ENCODE measurements at regions of chr1 and their contacts with region 1.

Region 1: GRCh38 chr1:30732277-30732996 is 9.1 kb upstream of the MATN1 start:
- DNase-seq: no peak
- ATAC-seq: peak; percentile 57
- H3K4me3 Mint-ChIP-seq: no peak overlapping the region
- H3K27ac Mint-ChIP-seq: peak overlapping the region; percentile 70
- H3K4me1 Mint-ChIP-seq: peaks cover 72% of the 10 kb centered on the region
- H3K27me3 Mint-ChIP-seq: no peaks in the 10 kb centered on the region
- CTCF ChIP-seq: no peak

Region 2: GRCh38 chr1:30743584-30744059 is 11.2 kb after region 1 on chr1:
- CTCF ChIA-PET with region 1: interaction called, 10 read pairs
- POLR2A ChIA-PET with region 1: interaction called, 662 read pairs
- intact Hi-C with region 1: loop called (anchors 1 kb)
- DNase-seq: no peak
- ATAC-seq: peak; percentile 72
- H3K4me3 Mint-ChIP-seq: peak overlapping the region; percentile 72
- H3K27ac Mint-ChIP-seq: peak overlapping the region; percentile 96
- H3K4me1 Mint-ChIP-seq: peaks cover 99% of the 10 kb centered on the region
- H3K27me3 Mint-ChIP-seq: no peaks in the 10 kb centered on the region
- CTCF ChIP-seq: no peak

Region 3: DNA sequence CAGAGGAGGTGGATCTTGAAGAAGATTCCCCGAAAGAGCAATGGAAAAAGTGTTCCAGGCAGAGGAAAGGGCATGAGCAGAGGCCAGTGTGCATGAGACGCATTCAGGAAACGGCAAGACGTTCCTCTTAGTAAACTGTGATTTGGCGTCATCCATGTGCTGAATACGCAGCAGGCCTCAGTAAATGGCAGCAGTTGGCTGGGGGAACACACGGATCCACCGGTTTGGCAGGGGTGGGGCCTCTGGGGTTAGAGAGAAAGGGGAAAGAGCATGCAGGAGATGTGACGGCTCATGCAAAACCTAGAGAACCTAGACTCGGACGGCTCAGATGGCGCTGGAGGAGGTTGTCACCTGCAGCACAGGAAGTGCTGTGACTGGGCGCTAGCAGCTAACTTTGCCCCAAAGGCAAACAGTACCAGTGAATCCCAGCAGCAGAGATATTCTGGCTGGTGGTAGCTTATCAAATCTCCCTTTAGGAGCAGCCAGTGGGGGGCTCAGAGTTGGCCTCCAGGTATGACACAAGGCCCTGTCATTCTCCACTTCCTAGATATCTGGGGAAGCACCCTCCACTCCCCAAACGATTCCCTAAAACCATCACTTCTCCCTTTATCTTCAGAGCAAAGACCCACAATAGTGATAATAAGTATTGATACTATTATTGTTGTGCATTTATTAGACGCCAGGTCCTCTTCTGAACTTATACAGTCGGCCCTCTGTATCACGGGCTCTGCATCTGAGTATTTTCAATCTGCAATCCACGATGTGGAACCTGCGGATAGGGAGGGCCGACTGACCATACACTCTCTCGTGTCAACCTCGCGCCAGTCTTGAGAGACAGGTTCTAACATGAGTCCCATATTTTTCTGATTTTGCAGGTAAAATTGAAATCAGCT is 17.5 kb after region 1 on chr1:
- CTCF ChIA-PET with region 1: interaction called, 10 read pairs
- POLR2A ChIA-PET with region 1: interaction called, 662 read pairs
- intact Hi-C with region 1: loop called (anchors 1 kb)
- DNase-seq: peak; percentile 59
- ATAC-seq: peak; percentile 33
- H3K4me3 Mint-ChIP-seq: peak overlapping the region; percentile 79
- H3K27ac Mint-ChIP-seq: peak overlapping the region; percentile 96
- H3K4me1 Mint-ChIP-seq: peaks cover 95% of the 10 kb centered on the region
- H3K27me3 Mint-ChIP-seq: no peaks in the 10 kb centered on the region
- CTCF ChIP-seq: no peak

Region 4: DNA sequence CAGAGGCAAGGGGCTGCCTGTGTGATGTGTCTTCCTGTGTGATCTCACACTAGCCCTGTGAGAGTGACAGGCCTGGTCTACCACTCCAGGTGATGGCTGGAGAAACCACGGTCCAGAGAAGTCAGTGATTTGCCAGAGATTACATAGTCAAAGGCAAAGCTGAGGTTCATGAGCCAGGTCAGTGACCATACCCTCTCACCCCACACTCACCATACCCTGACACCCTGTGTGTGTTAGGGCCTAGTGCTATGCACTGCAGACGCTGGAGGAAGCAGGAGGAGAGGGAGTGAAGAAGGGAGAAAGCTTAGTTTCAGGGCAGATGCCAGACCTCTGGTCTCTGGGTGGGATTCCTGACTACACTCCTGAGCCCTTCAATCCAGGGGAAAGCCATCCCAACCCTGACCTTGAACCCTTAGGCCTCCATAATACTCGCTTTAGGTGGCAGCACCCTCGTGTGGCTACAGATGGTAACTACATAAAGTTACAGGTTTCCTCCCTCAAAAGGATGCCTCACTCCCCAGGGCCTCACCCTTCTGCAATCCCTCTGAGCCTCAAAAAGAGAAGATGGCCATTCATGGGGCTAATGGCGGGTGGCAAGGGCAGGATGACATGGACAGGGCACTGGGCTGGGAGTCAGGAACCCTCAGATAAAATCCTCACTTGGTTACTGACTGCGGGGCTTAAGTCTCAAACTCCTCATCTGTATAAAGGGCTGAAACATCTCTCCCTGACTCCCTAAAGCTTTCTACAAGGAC is 196.9 kb after region 1 on chr1:
- CTCF ChIA-PET with region 1: interaction called, 3 read pairs
- POLR2A ChIA-PET with region 1: no interaction called
- intact Hi-C with region 1: loop called (anchors 5 kb)
- DNase-seq: no peak
- ATAC-seq: peak; percentile 56
- H3K4me3 Mint-ChIP-seq: no peak overlapping the region
- H3K27ac Mint-ChIP-seq: no peak overlapping the region
- H3K4me1 Mint-ChIP-seq: peaks cover 14% of the 10 kb centered on the region
- H3K27me3 Mint-ChIP-seq: no peaks in the 10 kb centered on the region
- CTCF ChIP-seq: peak; percentile 76

Measured in activated B cell treated with CpG ODN at 0.5 μM for 24 hours (primary cell).